Natural killer cell (primary cell): ENCODE measurements at regions of chr1 and their contacts with region 1.

Region 1: DNA sequence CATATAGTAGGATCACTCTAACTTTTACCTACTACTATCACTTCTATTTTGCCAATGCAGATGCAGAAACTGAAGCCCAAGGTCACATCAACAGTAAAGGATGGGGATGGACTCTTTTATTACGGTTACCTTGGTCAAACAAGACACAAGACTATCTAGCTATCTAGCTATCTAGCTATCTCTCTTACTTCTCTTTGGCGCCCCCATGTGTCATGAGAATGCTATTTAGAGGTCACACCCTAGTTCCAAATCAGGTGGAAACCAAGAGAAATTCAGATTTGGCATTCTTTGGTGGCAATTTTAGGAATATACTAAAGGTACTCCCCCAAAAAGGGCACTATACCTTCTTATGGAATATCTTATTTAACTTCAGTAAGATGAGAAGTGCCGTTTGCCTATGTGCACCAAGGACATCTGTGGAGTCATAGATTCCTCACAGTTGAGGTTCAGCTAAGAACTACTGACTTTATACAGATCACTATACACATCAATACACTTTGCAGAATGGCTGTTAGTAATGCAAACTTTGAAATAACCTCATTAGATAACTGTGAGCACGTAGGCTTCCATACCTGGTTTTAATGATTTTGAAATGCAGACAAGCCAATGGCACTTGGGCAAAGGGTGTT is 6.7 kb downstream of the ZNF648 start:
- DNase-seq: peak in 1 of 2 donors; percentile 75
- ATAC-seq: peak in 1 of 3 donors; percentile 63
- H3K4me3 ChIP-seq: no peak overlapping the region
- H3K4me3 Mint-ChIP-seq: no peak overlapping the region
- H3K27ac ChIP-seq: no peak overlapping the region
- H3K27ac Mint-ChIP-seq: no peak overlapping the region
- H3K4me1 ChIP-seq: no peaks in the 10 kb centered on the region
- H3K4me1 Mint-ChIP-seq: no peaks in the 10 kb centered on the region
- H3K27me3 ChIP-seq: no peaks in the 10 kb centered on the region
- H3K27me3 Mint-ChIP-seq: peaks cover 17 to 32% of the 10 kb centered on the region in 2 donors
- CTCF ChIP-seq: peak; percentile 62

Region 2: DNA sequence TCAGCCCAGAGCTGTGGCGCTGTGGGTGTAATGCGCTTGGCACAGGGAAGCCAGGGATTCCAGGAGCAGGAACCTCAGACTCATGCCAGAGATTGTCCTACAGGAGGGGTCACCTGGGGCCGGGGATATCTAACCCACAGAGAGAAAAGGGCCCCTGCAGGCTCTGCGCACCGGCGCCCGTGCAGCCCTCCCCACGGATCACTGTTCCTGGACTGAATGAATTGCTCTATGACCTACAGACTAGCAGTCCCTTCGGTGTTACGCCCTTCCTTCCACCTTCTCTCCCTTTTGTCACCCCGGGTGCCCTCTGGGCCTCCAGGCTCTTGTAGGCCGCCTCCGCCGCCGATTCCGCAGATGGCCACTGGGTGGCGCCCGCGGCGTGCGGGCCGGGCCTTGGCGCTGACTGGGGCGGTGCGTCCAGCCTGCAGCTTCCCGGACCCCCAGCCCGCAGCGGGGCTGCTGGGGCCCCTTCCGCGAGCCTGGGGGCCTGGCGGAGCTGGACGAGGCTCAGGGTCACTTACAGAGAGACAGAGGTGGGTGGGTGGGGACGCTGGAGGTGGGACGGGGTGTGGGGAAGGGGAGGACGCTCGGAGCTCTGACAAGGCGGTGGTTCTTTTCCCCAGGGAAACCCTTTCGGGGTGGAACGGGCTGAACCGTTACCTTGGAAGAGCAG is 865.0 kb before region 1 on chr1:
- intact Hi-C with region 1: loop called (anchors 2 kb)
- DNase-seq: peak; percentile 74 to 82
- ATAC-seq: peak; percentile 78 to 93 (median 90)
- H3K4me3 ChIP-seq: no peak overlapping the region
- H3K4me3 Mint-ChIP-seq: no peak overlapping the region
- H3K27ac ChIP-seq: no peak overlapping the region
- H3K27ac Mint-ChIP-seq: no peak overlapping the region
- H3K4me1 ChIP-seq: peaks cover 9% of the 10 kb centered on the region
- H3K4me1 Mint-ChIP-seq: peaks cover 0 to 13% of the 10 kb centered on the region in 2 donors
- H3K27me3 ChIP-seq: no peaks in the 10 kb centered on the region
- H3K27me3 Mint-ChIP-seq: peaks cover 31 to 37% of the 10 kb centered on the region in 2 donors
- CTCF ChIP-seq: peak; percentile 83

Region 3: DNA sequence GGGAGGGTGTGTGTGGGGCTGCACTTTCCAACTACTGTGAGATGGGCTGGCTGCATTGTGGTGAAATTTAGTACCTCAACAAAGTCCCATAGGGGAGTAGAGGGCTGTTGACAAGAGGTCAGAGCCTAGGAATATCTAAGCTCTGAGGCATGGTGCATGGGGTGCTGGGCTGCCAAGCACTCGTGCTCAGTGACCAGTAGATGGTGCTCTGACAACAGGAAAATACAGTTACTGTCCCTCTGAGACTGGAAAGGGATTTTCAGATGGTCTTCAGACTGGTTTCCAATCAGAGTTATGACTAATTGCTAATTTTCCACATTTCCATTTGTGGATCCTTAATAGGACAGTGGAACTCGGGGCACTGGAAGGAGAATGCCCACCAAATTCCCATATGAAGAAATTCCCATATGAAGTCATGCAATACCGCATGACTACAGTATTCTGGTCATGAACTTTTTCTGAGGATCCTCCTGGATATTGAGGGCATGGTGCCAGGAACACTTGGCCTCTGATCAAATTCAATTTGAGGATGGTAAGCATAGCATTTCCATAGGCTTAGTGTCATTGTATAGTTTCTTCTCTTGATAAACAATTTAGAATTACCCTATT is 575.6 kb before region 1 on chr1:
- intact Hi-C with region 1: loop called (anchors 1 kb)
- DNase-seq: peak in 1 of 2 donors; percentile 67
- ATAC-seq: no peak
- H3K4me3 ChIP-seq: no peak overlapping the region
- H3K4me3 Mint-ChIP-seq: no peak overlapping the region
- H3K27ac ChIP-seq: no peak overlapping the region
- H3K27ac Mint-ChIP-seq: no peak overlapping the region
- H3K4me1 ChIP-seq: no peaks in the 10 kb centered on the region
- H3K4me1 Mint-ChIP-seq: no peaks in the 10 kb centered on the region
- H3K27me3 ChIP-seq: peaks cover 6% of the 10 kb centered on the region
- H3K27me3 Mint-ChIP-seq: peaks cover 14 to 30% of the 10 kb centered on the region in 2 donors
- CTCF ChIP-seq: peak; percentile 10

Region 4: GRCh38 chr1:181936768-181937581 is 117.8 kb before region 1 on chr1:
- intact Hi-C with region 1: no loop called
- DNase-seq: peak in 1 of 2 donors; percentile 54
- ATAC-seq: peak in 1 of 3 donors; percentile 32
- H3K4me3 ChIP-seq: no peak overlapping the region
- H3K4me3 Mint-ChIP-seq: no peak overlapping the region
- H3K27ac ChIP-seq: no peak overlapping the region
- H3K27ac Mint-ChIP-seq: no peak overlapping the region
- H3K4me1 ChIP-seq: no peaks in the 10 kb centered on the region
- H3K4me1 Mint-ChIP-seq: no peaks in the 10 kb centered on the region
- H3K27me3 ChIP-seq: no peaks in the 10 kb centered on the region
- H3K27me3 Mint-ChIP-seq: no peaks in the 10 kb centered on the region
- CTCF ChIP-seq: no peak

Region 5: GRCh38 chr1:182069028-182069466 is 14.2 kb after region 1 on chr1:
- intact Hi-C with region 1: no loop called
- DNase-seq: peak in 1 of 2 donors; percentile 55
- ATAC-seq: peak in 1 of 3 donors; percentile 65
- H3K4me3 ChIP-seq: no peak overlapping the region
- H3K4me3 Mint-ChIP-seq: no peak overlapping the region
- H3K27ac ChIP-seq: no peak overlapping the region
- H3K27ac Mint-ChIP-seq: no peak overlapping the region
- H3K4me1 ChIP-seq: no peaks in the 10 kb centered on the region
- H3K4me1 Mint-ChIP-seq: peaks cover 0 to 7% of the 10 kb centered on the region in 2 donors
- H3K27me3 ChIP-seq: peaks cover 2% of the 10 kb centered on the region
- H3K27me3 Mint-ChIP-seq: peaks cover 15 to 24% of the 10 kb centered on the region in 2 donors
- CTCF ChIP-seq: peak; percentile 30